ENCODE measurements at regions of chr18 and their contacts with region 1.

Region 1: DNA sequence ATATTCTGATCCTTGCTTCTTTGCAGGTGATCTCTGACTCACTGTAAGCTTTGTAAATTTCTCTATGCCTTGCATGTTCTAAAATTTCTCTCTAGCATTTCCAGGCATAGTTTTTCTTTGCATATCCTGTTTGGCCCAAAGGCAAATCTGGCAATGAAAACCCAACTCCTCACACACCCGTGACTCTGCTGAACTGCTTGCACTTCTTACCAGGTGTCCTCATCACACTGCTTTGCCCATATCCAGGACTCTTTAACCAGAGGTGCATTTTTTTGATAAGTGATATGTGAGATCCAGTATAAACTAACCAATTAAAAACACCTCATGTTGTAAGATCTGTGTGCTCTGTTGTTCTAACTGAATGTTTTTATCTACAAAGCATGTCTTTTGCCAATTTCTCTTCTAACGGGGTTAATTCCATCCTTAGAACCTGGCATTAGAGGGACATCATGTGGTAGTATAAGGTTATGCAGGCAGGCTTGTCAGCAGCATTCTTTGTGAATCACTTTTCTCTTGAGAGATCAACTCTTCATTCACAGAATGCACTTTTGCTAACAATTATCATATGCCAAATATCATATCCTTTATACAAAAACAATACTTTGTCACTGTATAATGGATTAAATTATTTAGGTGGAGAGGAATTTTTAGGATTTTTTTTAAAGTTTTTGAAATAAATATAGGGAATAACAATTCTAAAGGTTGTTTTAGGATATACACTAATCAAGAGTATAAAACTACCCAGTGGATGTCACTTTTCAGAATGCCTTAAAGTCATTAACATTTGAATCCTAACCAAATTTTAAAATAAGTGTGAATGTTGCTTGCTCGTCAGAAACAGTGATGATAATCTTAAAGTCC is 20.8 kb upstream of the TMX3 start:
- DNase-seq: peak; percentile 66
- ATAC-seq: peak; percentile 70
- H3K4me3 ChIP-seq: no peak overlapping the region
- H3K27ac ChIP-seq: 0 out of 2 replicates have a peak overlapping the region, but pooled peaks have one; percentile 5
- H3K4me1 ChIP-seq: peaks cover 21% of the 10 kb centered on the region
- H3K27me3 ChIP-seq: no peaks in the 10 kb centered on the region
- CTCF ChIP-seq: peak; percentile 91

Region 2: GRCh38 chr18:67875944-67876343 is 859.8 kb before region 1 on chr18:
- CTCF ChIA-PET with region 1: no interaction called
- POLR2A ChIA-PET with region 1: no interaction called
- intact Hi-C with region 1: loop called (anchors 10 kb)
- DNase-seq: peak; percentile 77
- ATAC-seq: peak; percentile 66
- H3K4me3 ChIP-seq: no peak overlapping the region
- H3K27ac ChIP-seq: peak overlapping the region; percentile 27; the same call in 1 of the 2 replicates
- H3K4me1 ChIP-seq: peaks cover 13% of the 10 kb centered on the region
- H3K27me3 ChIP-seq: no peaks in the 10 kb centered on the region
- CTCF ChIP-seq: no peak

Region 3: GRCh38 chr18:68660354-68661183 is 75.1 kb before region 1 on chr18:
- CTCF ChIA-PET with region 1: no interaction called
- POLR2A ChIA-PET with region 1: no interaction called
- intact Hi-C with region 1: loop called (anchors 5 kb)
- DNase-seq: peak; percentile 69
- ATAC-seq: peak; percentile 78
- H3K4me3 ChIP-seq: peak overlapping the region; percentile 45; the same call in 1 of the 2 replicates
- H3K27ac ChIP-seq: no peak overlapping the region
- H3K4me1 ChIP-seq: peaks cover 8% of the 10 kb centered on the region; the same call in 1 of the 2 replicates
- H3K27me3 ChIP-seq: no peaks in the 10 kb centered on the region
- CTCF ChIP-seq: peak; percentile 79

Region 4: DNA sequence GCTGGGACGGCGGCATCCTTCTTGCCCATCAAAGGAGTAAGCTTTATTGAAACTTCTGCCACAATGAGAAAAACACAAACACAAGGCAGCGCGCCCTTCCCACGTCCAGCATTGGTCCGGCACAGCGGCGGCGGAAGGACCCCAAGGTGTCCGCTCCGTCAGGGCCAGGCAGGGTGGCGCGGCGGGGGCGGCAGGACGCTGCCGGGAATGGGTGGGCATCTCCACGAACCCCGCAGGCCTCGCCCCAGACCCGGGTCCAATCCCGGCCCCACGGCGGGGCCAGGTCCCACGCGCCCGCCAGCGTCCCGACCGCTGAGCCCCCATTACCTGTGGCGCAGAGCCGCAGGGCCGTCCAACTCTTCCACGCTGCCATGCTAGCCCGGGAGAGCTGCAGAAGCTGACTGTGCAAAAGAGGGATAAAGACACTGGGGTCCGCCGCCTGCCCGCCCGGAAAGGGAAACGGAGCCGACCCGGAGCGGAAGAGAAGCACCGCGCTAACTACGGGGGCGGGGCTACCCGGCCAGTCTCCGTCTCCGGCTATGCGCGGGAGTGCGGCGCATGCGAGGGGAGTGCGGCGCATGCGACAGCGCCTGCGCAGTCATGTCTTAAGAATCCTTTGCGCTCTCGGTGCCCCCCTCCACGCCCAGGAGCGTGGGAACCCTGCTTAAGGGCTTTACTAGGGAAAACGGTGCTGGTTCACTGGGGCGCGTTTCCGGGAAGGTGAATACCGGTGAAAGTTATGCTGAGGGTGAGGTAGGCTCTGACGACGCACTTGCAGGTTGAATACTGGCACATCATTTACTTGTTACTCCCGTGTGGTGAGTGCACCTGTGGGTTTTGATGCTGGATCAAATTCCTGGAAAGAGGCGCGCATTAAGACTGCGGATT is 20.9 kb before region 1 on chr18 and contains the start of gene TMX3:
- CTCF ChIA-PET with region 1: no interaction called
- POLR2A ChIA-PET with region 1: no interaction called
- intact Hi-C with region 1: loop called (anchors 1 kb)
- DNase-seq: peak; percentile 97
- ATAC-seq: peak; percentile 96
- H3K4me3 ChIP-seq: peak within 1 kb of the TSS; percentile 91
- H3K27ac ChIP-seq: peak within 1 kb of the TSS; percentile 72
- H3K4me1 ChIP-seq: peaks cover 16% of the 10 kb centered on the region
- H3K27me3 ChIP-seq: no peaks in the 10 kb centered on the region
- CTCF ChIP-seq: no peak
- total RNA-seq, gene TMX3: 39.1 and 50.1 TPM in 2 replicates

Region 5: GRCh38 chr18:68847219-68847837 is 111.6 kb after region 1 on chr18:
- CTCF ChIA-PET with region 1: no interaction called
- POLR2A ChIA-PET with region 1: no interaction called
- intact Hi-C with region 1: loop called (anchors 10 kb)
- DNase-seq: peak; percentile 44
- ATAC-seq: no peak
- H3K4me3 ChIP-seq: no peak overlapping the region
- H3K27ac ChIP-seq: no peak overlapping the region
- H3K4me1 ChIP-seq: no peaks in the 10 kb centered on the region
- H3K27me3 ChIP-seq: no peaks in the 10 kb centered on the region
- CTCF ChIP-seq: peak; percentile 80

Measured in PC-3 (cell line).